Naive thymus-derived CD4-positive, alpha-beta T cell (primary cell): ENCODE measurements at regions of chr7 and their contacts with region 1.

Region 1: GRCh38 chr7:132394283-132395198 is 181.7 kb downstream of the PLXNA4 start:
- DNase-seq: peak in 7 of 9 donors; percentile 34 to 62 (median 40)
- ATAC-seq: peak; percentile 61
- H3K4me3 ChIP-seq: no peak overlapping the region
- H3K4me3 Mint-ChIP-seq: peak overlapping the region in 1 of 10 donors; percentile 36
- H3K27ac ChIP-seq: no peak overlapping the region
- H3K27ac Mint-ChIP-seq: peak overlapping the region in 2 of 9 donors; percentile 7 to 53
- H3K4me1 ChIP-seq: no peaks in the 10 kb centered on the region
- H3K4me1 Mint-ChIP-seq: peaks cover 0 to 30% (median 6%) of the 10 kb centered on the region in 7 donors
- H3K27me3 ChIP-seq: no peaks in the 10 kb centered on the region
- H3K27me3 Mint-ChIP-seq: peaks cover 0 to 27% (median 4%) of the 10 kb centered on the region in 5 donors

Region 2: DNA sequence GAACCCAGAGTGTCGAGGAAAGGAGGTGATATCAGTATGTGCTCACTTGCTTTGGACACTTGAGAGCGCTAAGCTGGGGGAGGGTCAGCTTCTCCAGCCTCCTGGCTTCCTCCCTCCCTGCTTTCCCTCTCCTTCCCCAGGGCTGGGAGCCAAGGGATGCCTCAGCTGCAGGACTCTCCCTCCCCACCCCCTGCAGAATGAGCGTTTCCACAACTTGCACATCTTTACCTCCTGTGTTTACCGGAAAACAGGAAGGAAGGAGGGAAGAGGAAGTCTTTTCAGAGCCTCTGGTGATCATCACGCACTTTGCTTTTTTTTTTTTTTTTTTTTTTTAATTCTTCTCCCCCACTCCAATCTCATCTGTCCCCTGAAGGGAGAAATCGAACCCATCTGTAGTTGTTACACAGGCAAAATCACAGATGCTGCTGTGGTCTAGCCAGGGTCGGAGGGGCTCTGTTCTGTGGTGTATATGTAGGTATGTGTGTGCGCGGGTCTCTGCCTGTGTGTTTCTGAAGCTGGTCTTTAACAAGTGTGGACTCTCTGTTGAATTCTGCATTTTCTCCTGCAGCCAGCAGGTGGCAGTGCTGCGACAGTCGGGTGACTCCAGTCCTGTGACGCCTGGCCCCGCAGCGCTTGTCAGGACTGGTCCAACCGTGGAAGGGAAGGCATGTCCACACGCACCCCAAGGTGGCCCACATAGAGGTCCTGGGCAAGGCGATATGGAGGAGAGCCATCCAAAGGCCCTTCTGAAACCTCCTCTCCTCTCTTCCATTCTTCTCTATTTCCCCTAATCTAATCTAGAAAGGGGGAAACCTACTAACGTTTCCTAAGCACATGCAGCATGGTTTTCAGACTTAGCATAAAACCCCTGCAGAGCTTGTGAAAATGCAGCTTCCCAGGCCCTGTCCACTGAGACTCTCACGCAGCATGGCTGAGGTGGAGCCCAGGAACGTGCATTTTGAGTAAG is 75.9 kb before region 1 on chr7:
- CTCF ChIA-PET with region 1: interaction called, 8 read pairs
- POLR2A ChIA-PET with region 1: no interaction called
- intact Hi-C with region 1: loop called (anchors 1 kb)
- DNase-seq: peak; percentile 56 to 82 (median 75)
- ATAC-seq: peak; percentile 89
- H3K4me3 ChIP-seq: no peak overlapping the region
- H3K4me3 Mint-ChIP-seq: peak overlapping the region; percentile 6 to 71 (median 43)
- H3K27ac ChIP-seq: no peak overlapping the region
- H3K27ac Mint-ChIP-seq: no peak overlapping the region
- H3K4me1 ChIP-seq: peaks cover 0 to 8% of the 10 kb centered on the region in 2 donors
- H3K4me1 Mint-ChIP-seq: peaks cover 4 to 23% (median 15%) of the 10 kb centered on the region in 7 donors
- H3K27me3 ChIP-seq: no peaks in the 10 kb centered on the region
- H3K27me3 Mint-ChIP-seq: peaks cover 33 to 44% (median 42%) of the 10 kb centered on the region in 5 donors

Region 3: DNA sequence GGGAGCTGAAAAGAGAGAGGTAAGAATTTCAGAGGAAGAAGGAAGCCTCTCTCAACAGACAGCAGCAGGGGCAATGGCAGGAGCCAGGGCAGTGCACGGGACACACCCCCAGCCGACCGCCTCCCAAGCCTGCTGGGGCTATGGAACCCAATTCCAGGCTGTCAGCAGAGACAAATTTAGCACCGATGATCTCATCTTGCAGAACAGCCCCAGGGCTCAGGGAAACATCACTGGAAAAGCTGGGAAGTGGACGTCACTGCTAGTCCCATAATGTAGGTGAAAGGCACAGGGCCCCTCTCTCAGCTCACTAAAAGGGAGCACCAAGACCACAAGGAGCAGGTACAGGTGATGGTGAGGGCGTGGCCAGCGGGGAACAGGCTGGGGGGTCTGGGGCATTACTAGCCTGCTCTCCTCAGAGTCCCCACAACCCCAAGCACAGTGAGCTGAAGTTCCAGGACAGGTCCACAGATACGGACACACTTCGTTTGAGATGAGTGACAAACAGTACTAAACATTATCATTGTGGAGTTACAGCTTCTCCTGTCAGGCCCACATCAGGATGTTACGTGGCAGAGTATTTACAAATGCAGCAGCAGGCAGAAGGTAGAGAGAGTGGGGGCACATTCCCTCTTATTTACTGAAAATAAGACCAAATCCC is 78.1 kb after region 1 on chr7:
- CTCF ChIA-PET with region 1: interaction called, 5 read pairs
- POLR2A ChIA-PET with region 1: interaction called, 3 read pairs
- intact Hi-C with region 1: loop called in 1 of 2 experiments (anchors 1 kb)
- DNase-seq: no peak
- ATAC-seq: no peak
- H3K4me3 ChIP-seq: no peak overlapping the region
- H3K4me3 Mint-ChIP-seq: peak overlapping the region in 2 of 10 donors; percentile 17 to 32
- H3K27ac ChIP-seq: no peak overlapping the region
- H3K27ac Mint-ChIP-seq: peak overlapping the region in 2 of 9 donors; percentile 36 to 53
- H3K4me1 ChIP-seq: peaks cover 0 to 11% of the 10 kb centered on the region in 2 donors
- H3K4me1 Mint-ChIP-seq: peaks cover 11 to 73% (median 27%) of the 10 kb centered on the region in 7 donors
- H3K27me3 ChIP-seq: no peaks in the 10 kb centered on the region
- H3K27me3 Mint-ChIP-seq: peaks cover 0 to 65% (median 0%) of the 10 kb centered on the region in 5 donors

Region 4: GRCh38 chr7:132557489-132558044 is 163.0 kb after region 1 on chr7:
- CTCF ChIA-PET with region 1: interaction called, 3 read pairs
- POLR2A ChIA-PET with region 1: no interaction called
- intact Hi-C with region 1: loop called (anchors 1 to 5 kb)
- DNase-seq: no peak
- ATAC-seq: no peak
- H3K4me3 ChIP-seq: no peak overlapping the region
- H3K4me3 Mint-ChIP-seq: peak overlapping the region in 3 of 10 donors; percentile 8 to 48 (median 20)
- H3K27ac ChIP-seq: no peak overlapping the region
- H3K27ac Mint-ChIP-seq: peak overlapping the region in 1 of 9 donors; percentile 29
- H3K4me1 ChIP-seq: no peaks in the 10 kb centered on the region
- H3K4me1 Mint-ChIP-seq: peaks cover 0 to 33% (median 5%) of the 10 kb centered on the region in 7 donors
- H3K27me3 ChIP-seq: no peaks in the 10 kb centered on the region
- H3K27me3 Mint-ChIP-seq: peaks cover 0 to 52% (median 4%) of the 10 kb centered on the region in 5 donors

Region 5: GRCh38 chr7:133230591-133231194 is 836.2 kb after region 1 on chr7:
- CTCF ChIA-PET with region 1: no interaction called
- POLR2A ChIA-PET with region 1: no interaction called
- intact Hi-C with region 1: loop called (anchors 1 kb)
- DNase-seq: peak in 7 of 9 donors; percentile 13 to 45 (median 40)
- ATAC-seq: peak; percentile 57
- H3K4me3 ChIP-seq: no peak overlapping the region
- H3K4me3 Mint-ChIP-seq: no peak overlapping the region
- H3K27ac ChIP-seq: no peak overlapping the region
- H3K27ac Mint-ChIP-seq: no peak overlapping the region
- H3K4me1 ChIP-seq: no peaks in the 10 kb centered on the region
- H3K4me1 Mint-ChIP-seq: no peaks in the 10 kb centered on the region
- H3K27me3 ChIP-seq: no peaks in the 10 kb centered on the region
- H3K27me3 Mint-ChIP-seq: peaks cover 0 to 18% (median 0%) of the 10 kb centered on the region in 5 donors